HepG2 (cell line): ENCODE measurements at regions of chr20 and their contacts with region 1.

Region 1: GRCh38 chr20:38057351-38057972 is 23.9 kb downstream of the RPRD1B start:
- DNase-seq: peak; percentile 88
- ATAC-seq: peak; percentile 98
- H3K4me3 ChIP-seq: no peak overlapping the region
- H3K27ac ChIP-seq: no peak overlapping the region
- H3K4me1 ChIP-seq: peaks cover 22% of the 10 kb centered on the region
- H3K27me3 ChIP-seq: no peaks in the 10 kb centered on the region
- CTCF ChIP-seq: peak; percentile 98
- EP300 ChIP-seq: no peak
- POLR2A ChIP-seq: no peak
- RAD21 ChIP-seq: peak; percentile 89

Region 2: DNA sequence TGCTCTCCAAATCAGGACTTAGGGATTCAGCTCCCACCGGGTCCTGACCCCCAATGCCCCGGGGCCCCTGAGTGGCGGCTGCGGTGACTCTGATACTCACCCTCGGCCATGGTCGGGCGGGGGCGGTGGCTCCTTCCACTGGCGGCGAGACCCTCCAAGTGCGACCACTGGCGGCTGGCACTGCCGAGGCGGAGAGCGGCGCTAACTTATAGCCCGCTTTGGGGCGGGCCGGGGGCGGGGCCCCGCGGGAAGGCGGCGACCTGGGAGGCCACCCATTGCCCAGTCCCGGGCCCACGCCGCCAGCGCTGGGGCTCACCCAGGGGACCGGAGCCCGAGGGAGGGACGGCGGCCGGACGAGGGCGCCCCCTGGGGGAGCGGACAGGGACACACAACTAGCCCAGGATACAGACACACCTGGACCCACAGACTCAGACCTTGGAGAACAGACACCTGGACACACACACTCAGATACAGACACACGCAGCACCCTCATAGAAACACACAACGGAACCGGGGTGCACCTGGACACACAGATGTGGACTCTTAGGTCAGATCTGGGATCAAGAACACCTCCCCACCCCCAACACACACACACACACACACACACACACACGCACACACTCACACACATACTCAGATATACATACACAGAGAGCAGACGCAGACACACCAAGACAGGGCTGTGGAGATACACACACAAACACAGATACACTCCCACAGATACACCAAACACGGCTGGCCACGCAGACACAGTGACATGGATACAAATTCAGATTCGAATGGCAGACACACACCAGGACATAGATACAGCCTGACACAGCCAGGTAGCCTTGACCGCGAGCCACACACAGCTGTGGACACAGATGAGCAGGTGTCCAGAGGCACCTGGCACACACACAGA is 107.9 kb after region 1 on chr20 and contains the start of gene TGM2:
- CTCF ChIA-PET with region 1: interaction called, 28 read pairs
- POLR2A ChIA-PET with region 1: interaction called, 3 read pairs
- in situ Hi-C with region 1: loop called (anchors 5 kb)
- intact Hi-C with region 1: loop called (anchors 1 kb)
- DNase-seq: peak; percentile 87
- ATAC-seq: peak; percentile 90
- H3K4me3 ChIP-seq: peak within 1 kb of the TSS; percentile 57 to 82 (median 65)
- H3K27ac ChIP-seq: no peak within 1 kb of the TSS
- H3K4me1 ChIP-seq: peaks cover 87% of the 10 kb centered on the region
- H3K27me3 ChIP-seq: no peaks in the 10 kb centered on the region
- CTCF ChIP-seq: peak; percentile 95
- EP300 ChIP-seq: peak in 1 of 2 experiments; percentile 57; a peak in 2 of 4 replicates
- POLR2A ChIP-seq: peak in 1 of 2 experiments; percentile 74; a peak in 1 of 4 replicates
- RAD21 ChIP-seq: peak; percentile 100
- total RNA-seq, gene TGM2: 4.2 and 4.5 TPM in 2 replicates

Region 3: DNA sequence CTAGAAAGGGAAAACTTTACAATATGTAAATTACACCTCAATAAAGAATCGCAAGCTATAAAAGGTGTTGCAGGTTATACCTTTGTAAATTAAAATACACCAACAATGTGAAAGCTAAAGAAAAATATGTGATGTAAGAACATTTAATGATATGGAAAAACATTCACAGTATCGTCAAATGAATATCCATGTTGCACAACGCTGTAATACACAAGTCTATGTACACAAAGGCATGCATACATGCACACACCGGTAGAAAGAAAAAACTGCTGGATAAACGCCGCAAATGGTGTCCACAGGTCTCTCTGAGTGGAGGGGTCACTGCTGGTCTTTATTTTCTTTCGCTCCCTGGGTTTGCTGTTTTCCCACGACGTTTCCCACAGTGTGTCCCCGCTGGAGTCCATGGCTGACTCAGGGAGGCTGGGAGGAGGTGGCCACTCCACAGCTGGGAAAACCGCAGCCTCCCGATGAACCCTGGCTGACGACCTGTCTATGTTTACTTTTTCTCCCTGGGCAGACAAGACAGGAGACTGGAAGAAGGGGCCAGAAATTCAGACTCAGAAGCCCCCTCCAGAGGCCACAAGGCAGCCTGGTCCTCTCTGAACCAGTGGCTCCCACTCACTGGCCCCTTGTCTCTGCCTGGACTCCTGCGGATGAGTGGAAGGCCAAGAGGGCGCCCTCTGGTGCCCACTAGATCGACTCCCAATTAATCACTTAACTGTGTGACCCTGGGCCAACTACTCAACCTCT is 233.5 kb after region 1 on chr20:
- CTCF ChIA-PET with region 1: no interaction called
- POLR2A ChIA-PET with region 1: no interaction called
- in situ Hi-C with region 1: no loop called
- intact Hi-C with region 1: loop called (anchors 5 kb)
- DNase-seq: peak; percentile 87
- ATAC-seq: peak; percentile 88
- H3K4me3 ChIP-seq: peak overlapping the region in 1 of 3 experiments; percentile 32; a peak in 1 of 6 replicates
- H3K27ac ChIP-seq: no peak overlapping the region
- H3K4me1 ChIP-seq: peaks cover 21% of the 10 kb centered on the region
- H3K27me3 ChIP-seq: peaks cover 0 to 31% of the 10 kb centered on the region in 2 experiments; a peak in 4 of 5 replicates
- CTCF ChIP-seq: peak; percentile 89
- EP300 ChIP-seq: peak in 1 of 2 experiments; percentile 40; a peak in 1 of 4 replicates
- POLR2A ChIP-seq: no peak
- RAD21 ChIP-seq: peak; percentile 70

Region 4: DNA sequence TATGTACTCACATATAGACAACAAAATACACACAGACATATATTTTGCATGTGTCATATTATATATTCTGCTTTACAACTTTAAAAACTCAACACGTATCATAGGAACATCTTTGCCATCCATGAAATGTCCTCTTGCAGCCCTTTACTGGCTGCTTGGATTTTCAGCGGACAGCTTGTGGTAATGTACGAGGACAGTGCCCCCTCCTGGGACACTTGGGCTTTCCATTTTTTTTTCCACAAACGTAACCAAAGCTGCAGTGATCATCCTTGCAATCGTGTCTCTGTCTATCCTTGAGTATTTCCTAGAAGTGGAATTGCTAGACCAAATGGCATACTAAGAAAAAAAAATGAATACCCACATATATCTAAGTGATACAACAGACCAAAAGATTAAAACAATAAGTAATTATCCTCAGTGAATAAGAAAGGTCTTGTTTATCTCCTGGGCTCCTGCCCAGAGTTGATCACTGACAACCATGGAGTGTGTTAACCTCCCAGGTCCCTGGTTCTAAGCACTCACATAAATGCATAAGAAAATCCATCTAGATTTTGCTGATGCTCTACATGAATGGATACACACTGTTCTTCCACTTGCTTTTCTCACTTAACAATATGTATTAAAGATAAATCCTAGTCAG is 264.6 kb after region 1 on chr20:
- CTCF ChIA-PET with region 1: no interaction called
- POLR2A ChIA-PET with region 1: no interaction called
- in situ Hi-C with region 1: loop called (anchors 10 kb)
- intact Hi-C with region 1: loop called (anchors 1 kb)
- DNase-seq: peak; percentile 57
- ATAC-seq: peak; percentile 80
- H3K4me3 ChIP-seq: no peak overlapping the region
- H3K27ac ChIP-seq: no peak overlapping the region
- H3K4me1 ChIP-seq: no peaks in the 10 kb centered on the region
- H3K27me3 ChIP-seq: peaks cover 1 to 5% of the 10 kb centered on the region in 2 experiments; a peak in 2 of 5 replicates
- CTCF ChIP-seq: peak; percentile 78
- EP300 ChIP-seq: no peak
- POLR2A ChIP-seq: no peak
- RAD21 ChIP-seq: peak; percentile 63; the same call in 1 of the 2 replicates

Region 5: GRCh38 chr20:38412877-38413577 is 355.6 kb after region 1 on chr20:
- CTCF ChIA-PET with region 1: interaction called, 6 read pairs
- POLR2A ChIA-PET with region 1: no interaction called
- in situ Hi-C with region 1: loop called (anchors 25 kb)
- intact Hi-C with region 1: loop called (anchors 1 kb)
- DNase-seq: no peak
- ATAC-seq: no peak
- H3K4me3 ChIP-seq: no peak overlapping the region
- H3K27ac ChIP-seq: no peak overlapping the region
- H3K4me1 ChIP-seq: peaks cover 8% of the 10 kb centered on the region
- H3K27me3 ChIP-seq: no peaks in the 10 kb centered on the region
- CTCF ChIP-seq: no peak
- EP300 ChIP-seq: no peak
- POLR2A ChIP-seq: no peak
- RAD21 ChIP-seq: no peak

Region 6: DNA sequence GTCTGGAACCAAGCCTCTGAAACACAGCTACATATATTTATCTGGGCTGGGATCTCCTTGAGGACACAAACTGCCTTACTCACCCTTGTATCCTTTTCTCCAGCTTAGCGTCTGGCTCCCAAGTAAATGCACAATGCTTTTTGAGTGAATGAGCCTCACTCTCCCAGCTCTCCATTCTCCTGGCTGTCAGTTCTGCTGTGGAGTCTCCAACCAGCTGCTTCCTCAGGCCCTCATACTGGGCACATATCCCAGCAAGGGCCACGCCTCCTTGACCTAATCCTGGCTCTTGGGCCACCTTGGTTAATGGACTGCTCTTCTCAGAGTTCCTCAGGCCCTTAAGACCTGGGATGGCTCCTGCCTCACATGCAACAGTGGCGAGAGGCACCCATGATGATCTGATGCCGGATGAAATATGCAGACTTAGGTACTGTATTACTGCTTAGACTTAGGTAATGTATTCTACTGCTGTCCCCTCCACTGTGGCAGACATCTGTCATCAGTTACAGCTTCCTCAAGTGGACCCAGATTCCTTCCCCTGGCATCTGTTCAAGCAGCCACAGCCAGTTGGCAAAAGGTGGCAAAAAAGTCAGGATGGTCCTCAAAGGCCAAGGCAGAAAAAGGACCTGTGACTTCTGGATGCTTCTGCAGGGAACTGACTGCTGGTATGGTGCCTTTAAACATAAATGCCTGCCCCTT is 361.2 kb after region 1 on chr20:
- CTCF ChIA-PET with region 1: no interaction called
- POLR2A ChIA-PET with region 1: no interaction called
- in situ Hi-C with region 1: loop called (anchors 25 kb)
- intact Hi-C with region 1: no loop called
- DNase-seq: no peak
- ATAC-seq: peak; percentile 7
- H3K4me3 ChIP-seq: no peak overlapping the region
- H3K27ac ChIP-seq: no peak overlapping the region
- H3K4me1 ChIP-seq: no peaks in the 10 kb centered on the region
- H3K27me3 ChIP-seq: no peaks in the 10 kb centered on the region
- CTCF ChIP-seq: no peak
- EP300 ChIP-seq: no peak
- POLR2A ChIP-seq: peak in 1 of 2 experiments; percentile 56; a peak in 3 of 4 replicates
- RAD21 ChIP-seq: no peak